A673 (cell line): ENCODE measurements at regions of chr2 and their contacts with region 1.

Region 1: GRCh38 chr2:85851253-85852151 is 37.3 kb downstream of the ST3GAL5 start:
- DNase-seq: no peak
- H3K4me3 ChIP-seq: no peak overlapping the region
- H3K27ac ChIP-seq: no peak overlapping the region
- H3K4me1 ChIP-seq: peaks cover 7% of the 10 kb centered on the region
- H3K27me3 ChIP-seq: no peaks in the 10 kb centered on the region
- CTCF ChIP-seq: no peak

Region 2: DNA sequence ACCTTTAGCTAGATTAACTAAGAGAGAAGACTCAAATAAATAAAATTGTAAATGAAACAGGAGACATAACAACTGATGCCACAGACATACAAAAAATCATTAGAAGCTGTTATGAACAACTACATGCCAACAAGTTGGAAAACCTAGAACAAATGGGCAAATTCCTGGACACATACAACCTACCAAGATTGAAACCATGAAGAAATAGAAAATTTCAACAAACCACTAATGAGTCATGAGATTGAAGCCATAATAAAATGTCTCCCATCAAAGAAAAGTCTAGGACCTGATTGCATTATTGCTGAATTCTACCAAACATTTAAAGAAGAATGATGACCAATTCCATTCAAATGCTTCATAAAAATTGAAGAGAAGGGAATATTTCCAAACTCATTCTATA is 17.0 kb before region 1 on chr2:
- CTCF ChIA-PET with region 1: no interaction called
- POLR2A ChIA-PET with region 1: interaction called, 11 read pairs
- intact Hi-C with region 1: no loop called
- DNase-seq: no peak
- H3K4me3 ChIP-seq: no peak overlapping the region
- H3K27ac ChIP-seq: no peak overlapping the region
- H3K4me1 ChIP-seq: no peaks in the 10 kb centered on the region
- H3K27me3 ChIP-seq: no peaks in the 10 kb centered on the region
- CTCF ChIP-seq: no peak

Region 3: DNA sequence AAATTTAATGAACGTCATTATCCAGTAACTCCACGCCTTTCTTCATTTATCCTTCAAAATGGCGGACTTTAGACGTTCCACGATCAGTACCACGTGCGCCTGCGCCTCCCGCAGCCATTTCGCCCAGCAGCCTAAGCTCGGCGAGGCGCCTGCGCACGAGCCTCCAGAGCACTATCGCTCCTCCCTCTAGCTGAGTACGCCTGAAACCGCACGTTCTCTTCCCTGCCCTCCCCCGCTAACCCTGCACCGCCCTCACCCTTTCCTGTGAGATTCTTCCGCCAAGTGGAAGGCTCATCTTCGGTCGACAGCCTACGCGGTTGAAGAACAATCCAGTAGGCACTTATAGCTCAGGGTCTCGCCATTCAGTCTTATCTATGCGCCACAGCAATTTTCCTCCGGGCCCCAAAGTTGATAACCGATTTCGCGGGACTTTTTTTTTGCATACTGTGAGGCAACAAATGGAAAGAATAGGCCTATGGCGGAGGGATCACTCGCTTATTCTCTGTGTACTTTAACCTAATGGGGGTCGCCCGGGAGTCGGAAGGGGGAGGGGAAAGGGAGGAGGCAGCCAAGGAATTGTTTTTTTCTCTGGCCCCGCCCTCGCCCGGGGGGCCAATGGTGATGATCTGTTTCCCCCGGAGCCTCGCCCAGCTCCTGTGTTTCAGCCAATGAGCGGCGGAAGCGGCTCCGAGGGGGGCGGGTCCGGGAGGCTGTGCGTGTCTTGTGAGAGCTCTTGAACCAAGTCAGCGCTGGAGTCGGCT is 589.3 kb after region 1 on chr2 and contains the start of gene KDM3A:
- CTCF ChIA-PET with region 1: no interaction called
- POLR2A ChIA-PET with region 1: no interaction called
- intact Hi-C with region 1: no loop called
- DNase-seq: peak; percentile 100
- H3K4me3 ChIP-seq: peak within 1 kb of the TSS; percentile 61
- H3K27ac ChIP-seq: peak within 1 kb of the TSS; percentile 99
- H3K4me1 ChIP-seq: peaks cover 18% of the 10 kb centered on the region
- H3K27me3 ChIP-seq: no peaks in the 10 kb centered on the region
- CTCF ChIP-seq: no peak
- total RNA-seq, gene KDM3A: 40.7 and 43.8 TPM in 2 replicates